ENCODE measurements at regions of chr1 and their contacts with region 1.

Region 1: DNA sequence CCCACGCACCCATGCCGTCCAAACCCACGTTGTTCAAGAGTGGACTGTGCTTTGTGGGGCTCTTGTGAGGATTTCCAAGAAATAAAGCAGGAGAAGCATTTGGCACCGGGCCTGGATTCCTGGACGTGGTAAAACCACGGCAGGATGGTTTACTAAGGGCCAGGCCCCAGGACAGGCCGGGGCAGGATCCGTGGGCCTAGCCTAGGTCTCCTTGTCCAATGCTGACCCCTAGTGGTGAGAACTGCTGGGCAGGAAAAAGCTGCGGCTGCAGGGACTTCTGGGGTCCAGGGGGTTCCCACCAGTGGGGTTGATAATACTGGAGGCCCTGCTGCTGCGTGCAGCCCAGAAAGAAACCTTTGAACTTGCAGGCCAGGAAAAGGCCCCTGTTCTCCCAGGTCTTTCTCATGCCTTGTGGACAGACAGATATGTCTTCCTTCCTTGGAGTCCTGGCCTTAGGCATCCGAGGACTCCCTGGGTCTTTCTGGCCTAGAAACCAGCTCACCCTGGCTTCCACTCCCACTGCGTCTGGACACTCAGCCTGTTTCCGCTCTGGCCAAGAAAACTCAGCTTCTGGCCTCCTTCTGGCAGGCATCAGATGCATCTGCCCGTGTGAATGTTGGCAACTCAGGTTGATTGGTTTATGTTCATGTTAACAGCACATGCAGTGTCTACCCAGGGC is 106.9 kb upstream of the TMEM51 start:
- DNase-seq: peak; percentile 70 to 88 (median 78)
- H3K4me3 ChIP-seq: no peak overlapping the region
- H3K27ac ChIP-seq: peak overlapping the region in 39 of 59 donors; percentile 0 to 99 (median 48)
- H3K27me3 ChIP-seq: no peaks in the 10 kb centered on the region
- CTCF ChIP-seq: peak; percentile 88 to 99 (median 97)

Region 2: GRCh38 chr1:13960375-13960987 is 1086.1 kb before region 1 on chr1:
- intact Hi-C with region 1: loop called (anchors 5 to 10 kb)
- DNase-seq: peak; percentile 56 to 84 (median 70)
- H3K4me3 ChIP-seq: no peak overlapping the region
- H3K27ac ChIP-seq: no peak overlapping the region
- H3K27me3 ChIP-seq: no peaks in the 10 kb centered on the region
- CTCF ChIP-seq: peak; percentile 89 to 99 (median 97)

Region 3: GRCh38 chr1:14113841-14114567 is 932.6 kb before region 1 on chr1:
- intact Hi-C with region 1: loop called in 1 of 2 experiments (anchors 2 kb)
- DNase-seq: peak; percentile 57 to 86 (median 77)
- H3K4me3 ChIP-seq: no peak overlapping the region
- H3K27ac ChIP-seq: peak overlapping the region in 37 of 59 donors; percentile 0 to 81 (median 46)
- H3K27me3 ChIP-seq: no peaks in the 10 kb centered on the region
- CTCF ChIP-seq: peak in 55 of 56 donors; percentile 50 to 91 (median 77)

Region 4: DNA sequence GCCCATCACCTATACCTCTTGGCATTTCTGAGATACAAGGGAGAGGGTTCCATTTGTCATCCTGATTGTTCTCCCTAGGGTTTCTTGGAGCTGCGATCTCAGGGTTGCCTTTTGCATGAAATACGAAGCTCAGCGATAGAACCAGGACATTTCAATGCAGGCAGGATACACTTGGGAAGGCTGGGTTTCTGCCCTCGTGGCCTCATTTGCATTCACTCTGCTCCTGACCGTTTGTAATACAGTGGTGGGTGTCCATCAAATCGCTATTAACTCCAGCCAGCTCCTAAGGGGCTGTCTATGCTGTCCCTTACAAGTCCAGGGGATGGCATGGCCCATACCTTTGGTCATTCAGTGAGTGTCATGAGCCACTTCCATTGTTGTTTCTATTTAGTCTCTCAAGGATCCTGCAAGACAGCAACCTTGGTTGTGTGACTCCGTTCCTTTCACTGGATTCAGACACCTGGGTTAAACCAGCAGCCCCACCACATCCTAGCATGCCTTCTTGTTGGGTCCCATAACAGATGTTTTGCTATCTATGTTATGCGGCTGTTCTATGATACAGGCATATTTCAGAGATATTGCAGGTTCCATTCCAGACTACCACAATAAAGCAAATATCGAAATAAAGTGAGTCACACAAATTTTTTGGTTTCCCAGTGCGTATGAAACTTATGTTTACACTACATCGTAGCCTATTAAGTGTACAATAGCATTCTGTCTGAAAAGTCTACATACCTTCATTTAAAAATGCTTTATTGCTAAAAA is 429.8 kb before region 1 on chr1:
- intact Hi-C with region 1: loop called in 1 of 2 experiments (anchors 5 kb)
- DNase-seq: no peak
- H3K4me3 ChIP-seq: no peak overlapping the region
- H3K27ac ChIP-seq: peak overlapping the region in 1 of 59 donors; percentile 62
- H3K27me3 ChIP-seq: no peaks in the 10 kb centered on the region
- CTCF ChIP-seq: no peak

Region 5: DNA sequence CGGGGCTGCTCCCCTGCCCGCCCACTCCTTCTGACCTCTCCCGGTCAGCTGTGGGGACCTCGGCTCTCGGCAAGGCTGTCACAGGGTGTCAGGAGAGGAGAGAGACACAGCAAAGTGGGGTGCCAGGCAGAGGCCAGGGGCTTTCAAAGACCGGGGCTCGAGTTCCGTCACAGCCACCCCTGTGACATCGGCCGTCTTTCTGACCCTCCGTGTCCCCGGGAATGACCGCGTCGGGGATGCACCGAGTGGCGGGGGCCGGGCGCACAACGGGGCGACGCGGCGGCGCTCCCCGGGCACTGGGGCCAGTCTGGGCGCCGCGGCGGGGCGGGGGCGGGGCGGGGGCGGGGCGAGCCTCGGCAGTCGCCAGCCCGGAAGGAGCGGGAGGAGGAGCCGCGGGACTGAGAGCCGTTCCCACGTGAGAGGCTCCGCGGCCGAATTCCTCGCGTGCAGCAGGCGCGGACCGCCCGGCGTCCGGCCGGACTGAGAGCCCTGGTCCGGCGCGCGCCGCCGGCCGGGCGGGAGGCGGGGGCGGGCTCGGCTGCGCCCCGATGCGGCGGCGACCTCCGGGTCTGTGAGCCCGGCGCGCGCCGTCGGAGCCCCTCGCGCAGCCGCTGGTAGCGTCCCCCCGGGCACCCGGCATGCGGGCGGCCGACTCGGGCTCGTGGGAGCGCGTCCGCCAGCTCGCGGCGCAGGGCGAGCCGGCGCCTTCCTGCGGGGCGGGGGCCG is 122.7 kb before region 1 on chr1:
- intact Hi-C with region 1: loop called in 1 of 2 experiments (anchors 5 kb)
- DNase-seq: peak in 9 of 10 donors; percentile 34 to 81 (median 69)
- H3K4me3 ChIP-seq: peak overlapping the region in 56 of 59 donors; percentile 13 to 89 (median 64)
- H3K27ac ChIP-seq: peak overlapping the region in 56 of 59 donors; percentile 47 to 90 (median 83)
- H3K27me3 ChIP-seq: no peaks in the 10 kb centered on the region
- CTCF ChIP-seq: peak in 1 of 56 donors; percentile 8

Region 6: DNA sequence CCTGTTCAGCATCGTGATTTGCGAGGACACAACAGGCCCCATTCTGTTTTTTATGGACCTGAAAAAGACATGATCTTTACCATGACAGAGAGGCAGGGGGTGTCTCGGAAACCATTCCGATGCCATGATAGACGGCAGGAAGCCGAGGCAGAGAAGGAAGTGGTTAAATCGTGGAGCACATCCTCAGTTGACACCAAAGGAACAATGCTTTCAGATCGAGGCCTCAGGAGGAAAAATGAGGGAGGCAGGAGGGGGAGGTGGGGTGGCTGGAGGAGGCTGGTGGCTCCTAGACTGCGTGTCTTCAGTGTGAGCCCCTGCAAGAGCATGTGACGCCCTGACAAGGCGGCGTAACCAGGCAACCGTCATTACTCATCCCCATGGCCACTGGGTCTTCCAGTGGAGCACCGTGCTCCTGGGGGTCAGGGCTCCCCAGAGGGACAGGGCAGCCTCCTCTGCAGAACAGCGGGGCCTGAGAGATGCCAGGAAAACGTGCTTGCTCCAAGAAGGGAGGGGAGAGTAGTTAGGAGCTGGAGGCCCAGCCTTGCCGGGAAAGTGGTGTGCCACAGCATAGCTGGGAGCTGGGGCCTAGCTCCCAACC is 65.9 kb before region 1 on chr1:
- intact Hi-C with region 1: no loop called
- DNase-seq: no peak
- H3K4me3 ChIP-seq: no peak overlapping the region
- H3K27ac ChIP-seq: peak overlapping the region in 11 of 59 donors; percentile 7 to 45 (median 29)
- H3K27me3 ChIP-seq: no peaks in the 10 kb centered on the region
- CTCF ChIP-seq: no peak